Natural killer cell (primary cell): ENCODE measurements at regions of chr14 and their contacts with region 1.

Region 1: DNA sequence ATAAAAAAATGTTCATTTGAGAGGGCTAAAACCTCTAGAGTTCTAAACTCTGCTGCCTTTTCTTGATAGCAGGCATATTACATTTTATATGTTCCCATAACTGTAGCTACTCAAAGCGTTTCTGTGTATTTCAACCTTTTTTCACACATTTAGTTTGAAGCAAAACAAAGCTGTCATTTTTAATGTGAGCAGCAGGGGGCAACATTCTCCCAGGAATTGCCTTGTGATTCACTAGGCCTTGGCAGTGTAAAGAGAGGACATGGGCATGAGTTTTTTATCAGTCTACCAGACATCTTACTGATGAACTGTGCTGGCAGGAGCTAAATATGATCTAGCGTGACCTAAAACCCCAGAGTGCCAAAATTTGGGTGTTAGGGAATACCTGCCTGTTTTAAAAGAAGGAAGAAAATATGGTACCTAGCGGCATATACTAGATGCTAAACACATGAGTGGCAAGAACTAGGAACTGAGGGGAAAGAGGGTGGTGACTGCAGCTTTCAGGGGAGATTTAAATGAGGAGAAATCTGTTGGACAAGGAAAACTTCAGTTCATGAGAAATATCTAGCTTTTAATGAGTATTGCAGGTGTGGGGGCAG is 65.3 kb downstream of the IFT43 start:
- DNase-seq: peak; percentile 30 to 77
- ATAC-seq: peak; percentile 52 to 72 (median 55)
- H3K4me3 ChIP-seq: no peak overlapping the region
- H3K4me3 Mint-ChIP-seq: no peak overlapping the region
- H3K27ac ChIP-seq: no peak overlapping the region
- H3K27ac Mint-ChIP-seq: no peak overlapping the region
- H3K4me1 ChIP-seq: no peaks in the 10 kb centered on the region
- H3K4me1 Mint-ChIP-seq: peaks cover 0 to 4% of the 10 kb centered on the region in 2 donors
- H3K27me3 ChIP-seq: no peaks in the 10 kb centered on the region
- H3K27me3 Mint-ChIP-seq: no peaks in the 10 kb centered on the region
- CTCF ChIP-seq: peak; percentile 84

Region 2: GRCh38 chr14:76352639-76353281 is 301.9 kb after region 1 on chr14:
- intact Hi-C with region 1: loop called (anchors 1 kb)
- DNase-seq: peak; percentile 42 to 63
- ATAC-seq: peak; percentile 47 to 80 (median 52)
- H3K4me3 ChIP-seq: no peak overlapping the region
- H3K4me3 Mint-ChIP-seq: no peak overlapping the region
- H3K27ac ChIP-seq: no peak overlapping the region
- H3K27ac Mint-ChIP-seq: no peak overlapping the region
- H3K4me1 ChIP-seq: peaks cover 2% of the 10 kb centered on the region
- H3K4me1 Mint-ChIP-seq: peaks cover 0 to 6% of the 10 kb centered on the region in 2 donors
- H3K27me3 ChIP-seq: no peaks in the 10 kb centered on the region
- H3K27me3 Mint-ChIP-seq: peaks cover 15 to 24% of the 10 kb centered on the region in 2 donors
- CTCF ChIP-seq: peak; percentile 71

Region 3: DNA sequence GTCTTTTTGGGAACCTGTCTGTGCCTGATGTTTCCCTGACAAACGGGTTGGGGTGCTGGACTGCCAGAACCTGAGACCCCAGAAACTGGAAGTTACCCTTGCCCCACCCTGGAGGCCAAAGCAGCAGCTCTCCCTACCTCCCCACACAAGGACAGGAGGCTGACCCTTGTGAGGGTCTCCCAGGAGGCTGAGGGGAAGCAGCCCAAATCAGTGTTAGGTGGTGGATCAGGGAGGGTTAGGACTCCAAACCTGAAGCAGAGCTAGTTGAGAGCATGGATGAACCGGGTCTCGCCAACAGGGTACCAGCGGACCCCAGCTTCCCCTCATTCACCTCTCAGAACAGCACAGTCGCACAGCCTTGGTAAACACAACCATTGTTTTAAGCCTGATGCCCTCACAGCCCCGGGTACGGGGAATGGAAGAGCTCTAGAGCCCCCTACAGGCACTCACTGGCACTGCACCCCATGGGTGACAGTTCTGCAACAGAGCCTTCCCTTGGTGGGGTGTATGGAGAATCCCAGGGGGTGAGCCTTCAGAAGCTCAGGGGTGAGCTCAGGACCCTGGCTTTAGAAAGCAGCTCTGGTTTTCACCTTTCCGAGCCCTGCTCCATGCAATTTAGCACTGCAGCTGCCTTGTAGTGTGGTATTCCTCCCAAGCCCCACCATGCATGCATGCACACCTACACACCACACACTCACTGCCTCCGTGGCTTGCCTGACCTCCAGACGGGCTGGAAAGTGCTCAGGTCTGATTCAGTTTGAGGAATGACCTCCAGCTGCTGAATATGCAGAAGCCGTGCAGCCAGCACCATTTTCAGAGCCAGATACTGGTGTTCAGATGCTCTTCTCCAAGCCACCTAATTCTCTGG is 336.3 kb after region 1 on chr14:
- intact Hi-C with region 1: loop called (anchors 1 kb)
- DNase-seq: peak; percentile 44 to 64
- ATAC-seq: peak; percentile 70 to 92 (median 75)
- H3K4me3 ChIP-seq: no peak overlapping the region
- H3K4me3 Mint-ChIP-seq: no peak overlapping the region
- H3K27ac ChIP-seq: no peak overlapping the region
- H3K27ac Mint-ChIP-seq: no peak overlapping the region
- H3K4me1 ChIP-seq: no peaks in the 10 kb centered on the region
- H3K4me1 Mint-ChIP-seq: no peaks in the 10 kb centered on the region
- H3K27me3 ChIP-seq: peaks cover 8% of the 10 kb centered on the region
- H3K27me3 Mint-ChIP-seq: peaks cover 40 to 43% of the 10 kb centered on the region in 2 donors
- CTCF ChIP-seq: peak; percentile 72

Region 4: GRCh38 chr14:76647697-76648298 is 596.9 kb after region 1 on chr14:
- intact Hi-C with region 1: loop called (anchors 2 kb)
- DNase-seq: peak in 1 of 2 donors; percentile 50
- ATAC-seq: peak; percentile 26 to 71 (median 58)
- H3K4me3 ChIP-seq: no peak overlapping the region
- H3K4me3 Mint-ChIP-seq: no peak overlapping the region
- H3K27ac ChIP-seq: no peak overlapping the region
- H3K27ac Mint-ChIP-seq: no peak overlapping the region
- H3K4me1 ChIP-seq: no peaks in the 10 kb centered on the region
- H3K4me1 Mint-ChIP-seq: no peaks in the 10 kb centered on the region
- H3K27me3 ChIP-seq: no peaks in the 10 kb centered on the region
- H3K27me3 Mint-ChIP-seq: peaks cover 3 to 11% of the 10 kb centered on the region in 2 donors
- CTCF ChIP-seq: peak; percentile 74